Esophagus squamous epithelium (tissue), 5 donors: ENCODE measurements at regions of chr11 and their contacts with region 1.

Region 1: DNA sequence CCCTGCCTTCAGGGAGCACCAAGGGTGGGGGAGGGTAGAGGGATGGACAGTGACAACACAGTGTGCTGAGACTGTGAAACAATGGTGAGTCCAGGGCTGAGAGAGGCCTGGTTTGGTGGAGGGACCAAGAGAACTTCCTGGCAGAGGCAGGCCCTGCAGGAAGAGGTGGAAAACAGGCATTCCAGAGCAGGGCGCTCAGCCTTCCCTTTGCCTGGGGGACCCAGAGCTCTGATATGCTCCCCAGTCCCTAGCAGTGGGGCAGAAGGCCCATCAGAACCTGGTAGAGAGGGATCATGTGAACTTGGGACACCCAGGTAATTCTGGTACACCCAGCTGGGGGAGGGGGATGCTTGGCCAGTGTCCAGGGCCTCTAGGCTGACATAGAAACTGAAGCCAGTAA is 17.2 kb upstream of the UVRAG start:
- DNase-seq: no peak
- H3K4me3 ChIP-seq: no peak overlapping the region
- H3K27ac ChIP-seq: no peak overlapping the region
- H3K4me1 ChIP-seq: peaks cover 5 to 16% (median 5%) of the 10 kb centered on the region in 3 donors
- H3K27me3 ChIP-seq: no peaks in the 10 kb centered on the region
- CTCF ChIP-seq: no peak
- POLR2A ChIP-seq: no peak

Region 2: DNA sequence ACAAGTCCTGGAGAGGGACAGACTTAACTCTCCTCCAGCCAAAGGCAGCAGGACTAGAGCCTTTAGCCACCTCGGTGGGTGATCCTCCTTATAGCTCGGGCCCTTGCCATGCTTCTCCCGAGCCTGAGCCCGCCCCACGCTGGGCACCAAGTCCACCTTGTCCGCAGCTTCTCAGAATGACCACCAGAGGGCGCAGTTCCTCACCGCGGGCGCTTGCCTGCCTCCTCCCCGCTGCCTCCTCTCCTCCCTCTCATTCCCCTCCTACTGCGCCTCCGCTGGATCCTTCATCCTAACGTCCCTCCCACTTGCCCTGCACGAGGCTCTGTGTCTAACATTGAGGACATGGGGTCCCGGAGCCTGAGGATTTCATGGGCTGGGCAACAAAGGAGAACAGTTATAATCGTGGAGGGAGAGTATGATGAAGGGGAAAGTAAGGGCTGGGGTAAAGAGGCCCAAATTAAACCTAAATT is 91.5 kb before region 1 on chr11:
- intact Hi-C with region 1: loop called (anchors 10 kb)
- DNase-seq: no peak
- H3K4me3 ChIP-seq: peak overlapping the region in 1 of 4 donors; percentile 42
- H3K27ac ChIP-seq: no peak overlapping the region
- H3K4me1 ChIP-seq: peaks cover 0 to 7% (median 3%) of the 10 kb centered on the region in 3 donors
- H3K27me3 ChIP-seq: no peaks in the 10 kb centered on the region
- CTCF ChIP-seq: peak; percentile 80 to 94 (median 85)
- POLR2A ChIP-seq: no peak

Region 3: GRCh38 chr11:76248210-76248609 is 450.4 kb after region 1 on chr11:
- intact Hi-C with region 1: no loop called
- DNase-seq: no peak
- H3K4me3 ChIP-seq: no peak overlapping the region
- H3K27ac ChIP-seq: no peak overlapping the region
- H3K4me1 ChIP-seq: no peaks in the 10 kb centered on the region
- H3K27me3 ChIP-seq: peaks cover 0 to 21% (median 0%) of the 10 kb centered on the region in 4 donors
- CTCF ChIP-seq: peak in 1 of 6 experiments; percentile 12
- POLR2A ChIP-seq: no peak